ENCODE measurements at regions of chr4 and their contacts with region 1.

Region 1: DNA sequence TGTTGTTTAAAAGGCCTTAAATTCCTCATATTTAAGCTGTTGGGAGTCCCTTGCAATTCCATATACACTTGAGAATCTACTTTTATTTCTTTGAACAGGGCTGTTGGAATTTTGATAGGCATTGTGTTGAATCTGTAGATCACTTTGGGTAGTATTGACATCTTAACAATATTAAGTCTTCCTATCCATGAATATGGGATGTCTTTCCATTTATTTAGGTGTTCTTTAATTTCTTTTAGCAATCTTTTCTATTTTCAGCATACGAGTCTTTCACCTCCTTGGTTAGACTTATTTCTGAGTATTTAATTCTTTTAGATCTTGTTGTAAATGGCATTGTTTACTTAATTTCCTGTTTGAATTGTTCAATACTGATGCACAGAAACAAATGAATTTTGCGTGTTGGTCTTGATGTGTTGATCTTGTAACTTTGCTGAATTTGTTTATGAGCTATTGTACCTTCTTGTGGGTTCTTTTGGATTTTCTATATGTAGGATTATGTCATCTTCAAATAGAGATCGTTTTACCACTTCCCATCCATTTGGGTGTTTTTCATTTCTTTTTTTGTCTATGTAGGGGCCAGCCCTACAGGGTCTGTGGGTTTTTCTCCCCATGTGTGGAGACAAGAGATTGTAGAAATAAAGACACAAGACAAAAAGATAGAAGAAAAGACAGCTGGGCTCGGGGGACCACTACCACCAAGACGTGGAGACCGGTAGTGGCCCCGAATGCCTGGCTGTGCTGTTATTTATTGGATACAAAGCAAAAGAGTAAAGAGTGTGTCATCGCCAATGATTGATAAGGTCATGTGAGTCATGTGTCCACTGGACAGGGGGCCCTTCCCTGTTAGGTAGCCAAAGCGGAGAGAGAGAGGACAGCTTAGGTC is 18.2 kb upstream of the CTBP1 start:
- DNase-seq: no peak
- ATAC-seq: peak; percentile 79
- H3K4me3 Mint-ChIP-seq: peak overlapping the region; percentile 70
- H3K27ac Mint-ChIP-seq: peak overlapping the region; percentile 95
- H3K4me1 Mint-ChIP-seq: peaks cover 20% of the 10 kb centered on the region
- H3K27me3 Mint-ChIP-seq: no peaks in the 10 kb centered on the region

Region 2: GRCh38 chr4:1130316-1131186 is 136.6 kb before region 1 on chr4:
- CTCF ChIA-PET with region 1: interaction called, 24 read pairs
- POLR2A ChIA-PET with region 1: no interaction called
- DNase-seq: peak; percentile 85
- ATAC-seq: peak; percentile 99
- H3K4me3 Mint-ChIP-seq: no peak overlapping the region
- H3K27ac Mint-ChIP-seq: no peak overlapping the region
- H3K4me1 Mint-ChIP-seq: peaks cover 2% of the 10 kb centered on the region
- H3K27me3 Mint-ChIP-seq: peaks cover 19% of the 10 kb centered on the region

Region 3: GRCh38 chr4:1137063-1137776 is 129.9 kb before region 1 on chr4:
- CTCF ChIA-PET with region 1: interaction called, 24 read pairs
- POLR2A ChIA-PET with region 1: interaction called, 3 read pairs
- DNase-seq: no peak
- ATAC-seq: peak; percentile 64
- H3K4me3 Mint-ChIP-seq: peak overlapping the region; percentile 68
- H3K27ac Mint-ChIP-seq: peak overlapping the region; percentile 78
- H3K4me1 Mint-ChIP-seq: peaks cover 23% of the 10 kb centered on the region
- H3K27me3 Mint-ChIP-seq: peaks cover 12% of the 10 kb centered on the region

Region 4: DNA sequence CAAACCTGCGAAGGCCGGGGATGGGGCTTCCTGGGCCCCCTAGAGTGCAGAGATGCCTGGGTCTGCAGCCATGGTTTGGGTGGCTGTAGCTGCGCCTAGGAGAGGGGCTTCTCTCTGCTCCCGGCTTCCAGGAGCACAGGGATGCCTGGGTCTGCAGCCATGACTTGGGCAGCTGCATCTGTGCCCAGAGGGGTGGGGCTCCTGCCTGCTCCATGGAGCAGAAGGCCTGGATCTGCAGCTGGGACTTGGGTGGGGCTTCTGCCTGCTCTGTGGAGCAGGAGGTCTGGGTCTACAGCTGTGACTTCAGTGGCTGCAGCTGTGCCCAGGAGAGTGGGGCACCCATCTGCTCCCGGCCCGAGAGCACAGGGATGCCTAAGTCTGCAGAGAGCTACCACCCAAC is 115.6 kb before region 1 on chr4:
- CTCF ChIA-PET with region 1: no interaction called
- POLR2A ChIA-PET with region 1: no interaction called
- DNase-seq: no peak
- ATAC-seq: no peak
- H3K4me3 Mint-ChIP-seq: no peak overlapping the region
- H3K27ac Mint-ChIP-seq: no peak overlapping the region
- H3K4me1 Mint-ChIP-seq: no peaks in the 10 kb centered on the region
- H3K27me3 Mint-ChIP-seq: peaks cover 12% of the 10 kb centered on the region

Region 5: DNA sequence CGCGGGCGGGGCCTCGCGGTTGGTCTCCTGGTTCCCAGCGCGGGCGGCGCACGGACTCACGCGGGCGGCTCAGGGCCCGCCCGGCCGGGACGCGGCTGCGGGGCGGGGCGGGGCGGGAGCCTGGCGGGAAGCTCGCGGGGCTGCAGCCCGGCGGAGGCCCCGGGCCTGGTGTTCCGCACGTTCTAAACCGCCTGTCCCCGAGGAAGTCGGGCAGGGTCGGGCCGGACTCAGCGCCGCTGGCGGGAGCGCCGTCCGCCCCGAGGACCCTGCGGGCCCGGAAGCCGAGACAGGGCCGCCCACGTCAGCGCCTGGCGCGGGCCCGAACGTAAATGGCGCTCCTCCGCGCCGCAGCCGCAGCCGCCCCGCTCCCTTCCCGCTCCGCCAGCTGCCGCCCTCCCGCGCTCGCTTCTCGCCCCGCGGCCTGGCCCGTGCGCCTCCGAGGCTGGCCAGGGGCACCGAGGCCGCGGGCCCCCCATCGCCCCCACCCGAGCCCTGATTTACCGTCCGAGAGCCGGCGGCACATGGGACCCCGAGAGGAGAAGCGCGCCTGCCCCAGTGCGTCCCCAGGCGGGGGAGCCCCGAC is 17.9 kb before region 1 on chr4:
- CTCF ChIA-PET with region 1: interaction called, 57 read pairs
- POLR2A ChIA-PET with region 1: interaction called, 123 read pairs
- DNase-seq: peak; percentile 83
- ATAC-seq: peak; percentile 64
- H3K4me3 Mint-ChIP-seq: peak overlapping the region; percentile 86
- H3K27ac Mint-ChIP-seq: peak overlapping the region; percentile 95
- H3K4me1 Mint-ChIP-seq: peaks cover 66% of the 10 kb centered on the region
- H3K27me3 Mint-ChIP-seq: no peaks in the 10 kb centered on the region

Region 6: DNA sequence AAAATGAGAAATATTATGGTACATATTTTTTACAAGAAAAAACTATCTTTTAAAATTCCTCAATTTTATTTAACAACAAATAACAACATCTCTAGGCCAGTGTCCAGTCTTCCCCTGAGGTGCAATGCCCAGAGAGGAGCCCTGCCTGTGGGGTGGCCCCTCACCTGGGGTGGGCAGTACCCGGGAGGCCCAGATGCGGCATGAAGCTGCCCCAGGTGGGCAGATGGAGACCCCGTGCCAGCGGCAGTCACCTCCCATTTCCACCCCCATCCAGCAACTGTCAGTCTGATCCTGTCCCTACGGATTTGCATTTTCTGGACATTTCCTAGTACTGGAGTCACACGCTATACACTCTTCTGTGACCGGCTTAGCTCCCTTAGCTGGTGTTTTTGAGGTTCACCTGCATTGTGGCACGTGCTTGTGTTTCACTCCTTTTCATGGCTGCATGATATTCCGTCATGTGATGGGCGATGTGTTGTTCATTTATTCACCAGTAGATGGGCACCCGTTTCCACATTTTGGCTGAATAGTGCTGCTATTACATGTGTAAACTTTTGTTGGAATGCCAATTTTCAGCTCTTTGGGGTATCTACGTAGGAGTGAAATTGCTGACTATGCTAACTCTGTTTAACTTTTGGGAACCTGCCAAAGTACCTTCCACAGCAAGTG is 10.7 kb after region 1 on chr4:
- CTCF ChIA-PET with region 1: interaction called, 11 read pairs
- POLR2A ChIA-PET with region 1: no interaction called
- DNase-seq: no peak
- ATAC-seq: no peak
- H3K4me3 Mint-ChIP-seq: no peak overlapping the region
- H3K27ac Mint-ChIP-seq: no peak overlapping the region
- H3K4me1 Mint-ChIP-seq: no peaks in the 10 kb centered on the region
- H3K27me3 Mint-ChIP-seq: no peaks in the 10 kb centered on the region

Measured in activated CD8-positive, alpha-beta T cell treated with anti-CD3 and anti-CD28 coated beads, Interleukin-2, amount 10 ng/mL, durations not matched to agents 7 days and 5 days (primary cell).